B cell (primary cell): ENCODE measurements at regions of chr11 and their contacts with region 1.

Region 1: GRCh38 chr11:83156150-83156995 is 558 bp upstream of the PCF11 start:
- DNase-seq: peak; percentile 100
- ATAC-seq: peak; percentile 86
- H3K4me3 ChIP-seq: peak overlapping the region; percentile 67 to 95 (median 72)
- H3K4me3 Mint-ChIP-seq: peak overlapping the region; percentile 98
- H3K27ac ChIP-seq: peak overlapping the region; percentile 78 to 86
- H3K27ac Mint-ChIP-seq: peak overlapping the region; percentile 100
- H3K4me1 ChIP-seq: peaks cover 23 to 24% of the 10 kb centered on the region in 2 donors
- H3K4me1 Mint-ChIP-seq: peaks cover 38% of the 10 kb centered on the region
- H3K27me3 ChIP-seq: no peaks in the 10 kb centered on the region
- H3K27me3 Mint-ChIP-seq: no peaks in the 10 kb centered on the region
- CTCF ChIP-seq: no peak

Region 2: DNA sequence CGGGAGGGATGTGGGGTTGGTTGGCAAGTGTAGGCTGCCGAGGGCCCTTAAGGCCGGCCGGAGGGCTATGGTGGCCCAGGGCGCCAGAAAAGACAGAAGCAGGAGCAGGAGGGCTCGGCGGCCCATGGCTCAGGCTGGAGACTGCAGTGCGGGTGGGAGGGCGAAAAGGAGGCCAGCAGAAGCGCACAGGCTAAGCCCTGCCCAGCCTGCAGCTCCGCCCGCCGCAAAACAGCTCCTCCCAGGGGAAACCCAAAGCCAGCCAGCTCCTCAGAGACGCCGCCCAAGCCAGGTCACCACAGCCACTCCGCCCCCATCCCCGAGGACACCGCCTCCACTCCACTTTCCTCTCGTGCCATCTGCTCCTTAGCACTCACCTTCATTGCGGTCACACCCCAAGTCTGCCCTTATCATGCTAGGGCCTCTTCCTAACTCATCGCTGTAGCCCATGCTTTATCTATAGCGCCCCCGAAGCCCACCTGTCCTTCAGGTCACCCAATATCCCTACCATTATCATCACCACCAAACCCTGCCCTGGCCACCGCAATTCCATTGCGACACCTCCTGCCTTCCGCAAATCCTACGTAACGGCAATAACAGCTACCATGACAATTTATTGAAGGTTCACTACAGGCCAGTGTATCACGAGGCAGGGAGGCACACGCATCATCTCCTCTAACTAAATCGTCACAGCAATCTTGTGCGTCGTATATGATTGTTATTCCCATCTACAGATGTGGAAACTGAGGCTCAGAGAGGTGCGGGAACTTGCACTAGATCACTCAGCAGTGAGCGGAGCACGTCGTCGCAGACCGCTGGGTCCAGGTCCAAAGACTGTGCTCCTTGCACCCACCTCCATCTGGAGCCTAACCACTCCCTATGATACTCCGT is 255.9 kb before region 1 on chr11 and contains the start of gene PRCP:
- CTCF ChIA-PET with region 1: interaction called, 6 read pairs
- POLR2A ChIA-PET with region 1: interaction called, 25 read pairs
- intact Hi-C with region 1: loop called (anchors 1 kb)
- DNase-seq: peak; percentile 94
- ATAC-seq: peak; percentile 73
- H3K4me3 ChIP-seq: peak within 1 kb of the TSS; percentile 54 to 97 (median 93)
- H3K4me3 Mint-ChIP-seq: peak within 1 kb of the TSS; percentile 100
- H3K27ac ChIP-seq: peak within 1 kb of the TSS; percentile 94 to 95
- H3K27ac Mint-ChIP-seq: peak within 1 kb of the TSS; percentile 99
- H3K4me1 ChIP-seq: peaks cover 46 to 50% of the 10 kb centered on the region in 2 donors
- H3K4me1 Mint-ChIP-seq: peaks cover 52% of the 10 kb centered on the region
- H3K27me3 ChIP-seq: no peaks in the 10 kb centered on the region
- H3K27me3 Mint-ChIP-seq: no peaks in the 10 kb centered on the region
- CTCF ChIP-seq: no peak
- total RNA-seq, gene PRCP: 37.7 and 45.2 TPM in 2 replicates

Region 3: DNA sequence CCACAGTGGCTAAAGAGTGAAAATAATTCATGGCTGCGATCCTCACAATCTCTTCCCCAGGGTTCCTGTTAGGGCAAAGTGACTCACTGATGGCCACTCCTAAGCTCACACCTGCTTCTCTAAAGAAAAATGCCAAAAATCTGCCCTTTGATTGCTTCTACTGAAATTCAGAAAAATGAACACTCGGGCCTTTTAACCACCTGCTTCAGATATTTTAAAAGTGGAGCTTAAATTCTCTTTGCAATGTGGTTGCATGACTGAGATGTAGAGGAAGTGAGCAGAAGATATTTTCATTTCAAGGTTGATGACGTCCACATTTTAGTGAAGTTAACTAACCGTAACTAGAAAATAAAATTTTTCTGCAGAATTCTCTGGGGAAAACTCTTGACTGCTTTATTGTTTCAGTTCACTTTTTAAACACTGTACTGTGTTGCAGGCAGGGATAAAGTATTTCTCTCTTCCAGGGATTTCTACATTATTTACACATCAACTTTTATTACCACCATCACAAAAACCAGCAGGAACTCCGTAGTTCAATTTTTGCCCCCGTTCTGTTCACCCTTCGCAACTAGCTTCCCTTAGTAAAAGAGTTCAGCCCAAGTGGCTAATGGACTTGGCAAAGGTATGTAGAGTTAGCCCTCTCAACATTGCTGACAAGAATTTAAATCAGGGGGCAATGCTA is 93.2 kb before region 1 on chr11:
- CTCF ChIA-PET with region 1: interaction called, 4 read pairs
- POLR2A ChIA-PET with region 1: interaction called, 34 read pairs
- intact Hi-C with region 1: loop called (anchors 1 kb)
- DNase-seq: peak; percentile 91
- ATAC-seq: peak; percentile 68
- H3K4me3 ChIP-seq: peak overlapping the region; percentile 35 to 62 (median 51)
- H3K4me3 Mint-ChIP-seq: peak overlapping the region; percentile 89
- H3K27ac ChIP-seq: peak overlapping the region; percentile 86 to 94
- H3K27ac Mint-ChIP-seq: peak overlapping the region; percentile 98
- H3K4me1 ChIP-seq: peaks cover 92 to 95% of the 10 kb centered on the region in 2 donors
- H3K4me1 Mint-ChIP-seq: peaks cover 85% of the 10 kb centered on the region
- H3K27me3 ChIP-seq: no peaks in the 10 kb centered on the region
- H3K27me3 Mint-ChIP-seq: no peaks in the 10 kb centered on the region
- CTCF ChIP-seq: no peak

Region 4: GRCh38 chr11:83172551-83172950 is 16.2 kb after region 1 on chr11:
- CTCF ChIA-PET with region 1: interaction called, 3 read pairs
- POLR2A ChIA-PET with region 1: interaction called, 4 read pairs
- intact Hi-C with region 1: loop called (anchors 2 kb)
- DNase-seq: no peak
- ATAC-seq: no peak
- H3K4me3 ChIP-seq: no peak overlapping the region
- H3K4me3 Mint-ChIP-seq: peak overlapping the region; percentile 34
- H3K27ac ChIP-seq: peak overlapping the region; percentile 15 to 45
- H3K27ac Mint-ChIP-seq: no peak overlapping the region
- H3K4me1 ChIP-seq: peaks cover 67% of the 10 kb centered on the region in 2 donors
- H3K4me1 Mint-ChIP-seq: peaks cover 70% of the 10 kb centered on the region
- H3K27me3 ChIP-seq: no peaks in the 10 kb centered on the region
- H3K27me3 Mint-ChIP-seq: no peaks in the 10 kb centered on the region
- CTCF ChIP-seq: no peak

Region 5: DNA sequence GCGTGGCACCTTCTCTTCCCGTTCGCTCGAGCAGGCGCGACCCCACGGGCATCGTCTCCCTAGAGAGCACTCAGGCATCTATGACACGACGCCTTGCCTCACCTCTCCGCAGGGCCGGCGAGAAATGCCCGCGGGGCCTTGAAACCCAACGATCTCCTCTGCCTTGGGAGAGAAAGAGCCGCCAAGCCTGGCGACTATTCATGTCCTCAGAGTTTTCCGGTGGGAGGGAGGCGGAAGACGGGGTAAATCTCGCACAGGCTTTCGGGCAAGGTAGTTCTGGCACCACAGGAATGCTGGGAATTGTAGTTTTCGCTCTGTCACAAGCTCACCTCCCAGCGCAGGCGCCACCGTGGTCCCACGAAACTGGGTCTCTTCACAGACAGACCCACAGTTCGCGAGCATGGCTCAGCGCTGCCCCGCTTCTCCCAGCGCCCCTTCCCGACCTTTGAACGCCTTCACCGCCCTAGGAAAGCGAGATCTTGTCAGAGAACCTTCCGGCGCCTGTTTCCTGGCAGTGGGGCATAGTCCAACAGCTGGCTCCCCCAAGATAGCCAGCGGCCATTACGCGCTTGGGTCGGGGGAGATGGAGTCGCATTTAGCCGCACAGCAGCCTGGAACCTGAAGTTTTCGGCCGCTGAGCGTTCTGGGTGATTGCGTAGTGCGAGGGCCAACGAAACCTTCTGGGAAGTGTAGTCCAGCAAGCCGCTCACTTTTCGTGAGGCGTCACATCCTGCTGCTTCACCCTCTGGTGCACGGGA is 129.6 kb after region 1 on chr11 and contains the start of gene CCDC90B:
- CTCF ChIA-PET with region 1: no interaction called
- POLR2A ChIA-PET with region 1: interaction called, 4 read pairs
- intact Hi-C with region 1: loop called (anchors 1 kb)
- DNase-seq: peak; percentile 97
- ATAC-seq: peak; percentile 86
- H3K4me3 ChIP-seq: peak within 1 kb of the TSS; percentile 77 to 97 (median 91)
- H3K4me3 Mint-ChIP-seq: peak within 1 kb of the TSS; percentile 97
- H3K27ac ChIP-seq: peak within 1 kb of the TSS; percentile 92 to 96
- H3K27ac Mint-ChIP-seq: peak within 1 kb of the TSS; percentile 99
- H3K4me1 ChIP-seq: peaks cover 40 to 47% of the 10 kb centered on the region in 2 donors
- H3K4me1 Mint-ChIP-seq: peaks cover 59% of the 10 kb centered on the region
- H3K27me3 ChIP-seq: no peaks in the 10 kb centered on the region
- H3K27me3 Mint-ChIP-seq: no peaks in the 10 kb centered on the region
- CTCF ChIP-seq: no peak
- total RNA-seq, gene CCDC90B: 35.2 and 39.1 TPM in 2 replicates

Region 6: DNA sequence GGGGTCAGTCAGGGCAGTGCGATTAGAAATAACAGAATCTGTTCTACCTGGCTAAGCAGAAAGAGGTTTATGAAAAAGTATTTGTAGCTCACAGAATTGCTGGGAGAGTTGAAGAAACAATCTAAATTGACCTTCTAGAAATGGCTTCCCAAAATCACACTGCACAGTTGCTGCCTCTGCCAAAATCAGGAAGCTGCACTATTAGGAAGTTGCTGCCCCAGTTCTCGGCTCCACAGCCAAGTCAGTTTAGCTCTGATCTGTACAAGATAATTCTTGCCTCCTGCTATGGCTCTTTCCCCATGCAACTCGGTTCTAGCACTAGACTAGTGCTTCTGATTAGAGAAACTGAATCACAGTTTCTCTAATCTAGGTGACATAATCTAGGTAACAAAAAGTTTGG is 145.8 kb after region 1 on chr11:
- CTCF ChIA-PET with region 1: no interaction called
- POLR2A ChIA-PET with region 1: no interaction called
- intact Hi-C with region 1: no loop called
- DNase-seq: no peak
- ATAC-seq: no peak
- H3K4me3 ChIP-seq: no peak overlapping the region
- H3K4me3 Mint-ChIP-seq: no peak overlapping the region
- H3K27ac ChIP-seq: no peak overlapping the region
- H3K27ac Mint-ChIP-seq: no peak overlapping the region
- H3K4me1 ChIP-seq: no peaks in the 10 kb centered on the region
- H3K4me1 Mint-ChIP-seq: no peaks in the 10 kb centered on the region
- H3K27me3 ChIP-seq: no peaks in the 10 kb centered on the region
- H3K27me3 Mint-ChIP-seq: peaks cover 5% of the 10 kb centered on the region
- CTCF ChIP-seq: no peak

Region 7: GRCh38 chr11:83599066-83599465 is 442.7 kb after region 1 on chr11:
- CTCF ChIA-PET with region 1: no interaction called
- POLR2A ChIA-PET with region 1: no interaction called
- intact Hi-C with region 1: no loop called
- DNase-seq: no peak
- ATAC-seq: no peak
- H3K4me3 ChIP-seq: no peak overlapping the region
- H3K4me3 Mint-ChIP-seq: no peak overlapping the region
- H3K27ac ChIP-seq: no peak overlapping the region
- H3K27ac Mint-ChIP-seq: no peak overlapping the region
- H3K4me1 ChIP-seq: peaks cover 0 to 6% of the 10 kb centered on the region in 2 donors
- H3K4me1 Mint-ChIP-seq: peaks cover 15% of the 10 kb centered on the region
- H3K27me3 ChIP-seq: no peaks in the 10 kb centered on the region
- H3K27me3 Mint-ChIP-seq: no peaks in the 10 kb centered on the region
- CTCF ChIP-seq: no peak